ENCODE measurements at regions of chr15 and their contacts with region 1.

Region 1: DNA sequence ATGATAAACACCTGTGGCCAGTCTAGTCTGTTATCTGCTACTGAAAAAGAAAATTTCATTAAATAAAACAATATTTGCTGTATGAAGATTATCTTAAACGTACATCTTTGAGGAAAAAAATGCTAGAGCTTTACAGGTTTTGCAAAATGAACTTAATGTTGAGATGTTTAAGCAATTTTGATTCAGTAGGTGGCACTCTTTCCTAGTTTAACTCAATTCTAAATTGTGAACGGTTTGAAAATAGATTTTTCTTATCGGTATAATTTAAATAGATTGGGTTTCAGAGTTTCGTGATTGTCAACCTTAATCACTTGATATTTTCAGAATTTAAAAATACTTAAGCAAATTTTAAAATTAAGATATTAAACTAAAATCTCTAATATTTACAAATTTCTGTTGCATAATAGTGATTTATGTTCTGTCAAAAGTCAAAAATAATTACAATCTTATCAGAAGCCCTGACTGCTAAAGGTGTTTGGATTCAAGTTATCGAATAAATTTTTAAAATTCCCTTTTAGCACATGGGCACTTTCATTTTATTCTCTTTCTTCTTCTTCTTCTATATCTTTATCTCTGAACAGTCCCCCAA is 7.0 kb upstream of the RNF111 start:
- DNase-seq: no peak
- H3K4me3 ChIP-seq: no peak overlapping the region
- H3K4me3 Mint-ChIP-seq: no peak overlapping the region
- H3K27ac Mint-ChIP-seq: no peak overlapping the region
- H3K4me1 ChIP-seq: no peaks in the 10 kb centered on the region
- H3K4me1 Mint-ChIP-seq: no peaks in the 10 kb centered on the region
- H3K27me3 ChIP-seq: no peaks in the 10 kb centered on the region
- H3K27me3 Mint-ChIP-seq: peaks cover 4% of the 10 kb centered on the region
- CTCF ChIP-seq: peak in 1 of 2 experiments; percentile 24

Region 2: DNA sequence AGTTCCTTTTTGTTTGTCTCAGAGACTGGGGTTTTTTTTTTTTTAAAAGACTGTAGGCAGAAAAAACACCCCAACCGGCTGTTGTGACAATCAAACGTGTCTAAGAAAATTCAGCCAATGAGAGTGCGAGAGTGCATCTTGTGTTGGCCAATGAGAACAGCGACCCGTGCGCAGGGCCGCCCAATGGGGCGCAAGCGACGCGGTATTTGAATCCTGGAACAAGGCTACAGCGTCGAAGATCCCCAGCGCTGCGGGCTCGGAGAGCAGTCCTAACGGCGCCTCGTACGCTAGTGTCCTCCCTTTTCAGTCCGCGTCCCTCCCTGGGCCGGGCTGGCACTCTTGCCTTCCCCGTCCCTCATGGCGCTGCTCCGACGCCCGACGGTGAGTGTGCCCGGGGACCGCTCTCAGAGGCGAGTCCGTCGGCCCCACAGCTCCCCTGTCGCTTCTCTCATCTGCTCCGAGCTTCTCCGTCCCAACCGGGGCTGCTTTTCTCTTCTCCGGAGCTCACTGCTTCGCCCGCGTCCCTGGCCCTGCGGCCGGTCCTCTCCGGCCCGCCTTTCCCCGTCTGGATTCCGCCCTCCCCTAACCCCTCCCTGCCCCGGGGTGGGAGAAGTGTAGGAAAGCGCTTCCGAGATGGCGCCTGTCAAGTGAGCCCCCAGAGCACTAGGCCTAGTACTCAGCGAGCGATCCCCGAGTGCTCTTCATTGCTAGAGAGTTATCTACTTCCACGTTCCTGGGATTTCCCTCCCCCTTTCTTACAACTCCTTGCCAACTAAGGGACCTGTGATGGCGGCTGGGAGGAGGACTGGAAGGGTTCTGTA is 124.7 kb after region 1 on chr15 and contains the start of gene CCNB2:
- CTCF ChIA-PET with region 1: no interaction called
- POLR2A ChIA-PET with region 1: no interaction called
- intact Hi-C with region 1: loop called (anchors 2 kb)
- DNase-seq: peak; percentile 89 to 91
- H3K4me3 ChIP-seq: peak within 1 kb of the TSS; percentile 94
- H3K4me3 Mint-ChIP-seq: peak within 1 kb of the TSS; percentile 99
- H3K27ac Mint-ChIP-seq: peak within 1 kb of the TSS; percentile 100
- H3K4me1 ChIP-seq: no peaks in the 10 kb centered on the region
- H3K4me1 Mint-ChIP-seq: peaks cover 6% of the 10 kb centered on the region
- H3K27me3 ChIP-seq: no peaks in the 10 kb centered on the region
- H3K27me3 Mint-ChIP-seq: no peaks in the 10 kb centered on the region
- CTCF ChIP-seq: no peak
- total RNA-seq, gene CCNB2: 90.1 and 92.0 TPM in 2 replicates

Region 3: GRCh38 chr15:59138243-59138642 is 157.8 kb after region 1 on chr15:
- CTCF ChIA-PET with region 1: no interaction called
- POLR2A ChIA-PET with region 1: no interaction called
- intact Hi-C with region 1: loop called (anchors 1 kb)
- DNase-seq: peak; percentile 59 to 75
- H3K4me3 ChIP-seq: no peak overlapping the region
- H3K4me3 Mint-ChIP-seq: no peak overlapping the region
- H3K27ac Mint-ChIP-seq: no peak overlapping the region
- H3K4me1 ChIP-seq: no peaks in the 10 kb centered on the region
- H3K4me1 Mint-ChIP-seq: no peaks in the 10 kb centered on the region
- H3K27me3 ChIP-seq: no peaks in the 10 kb centered on the region
- H3K27me3 Mint-ChIP-seq: no peaks in the 10 kb centered on the region
- CTCF ChIP-seq: peak; percentile 62 to 73

Region 4: DNA sequence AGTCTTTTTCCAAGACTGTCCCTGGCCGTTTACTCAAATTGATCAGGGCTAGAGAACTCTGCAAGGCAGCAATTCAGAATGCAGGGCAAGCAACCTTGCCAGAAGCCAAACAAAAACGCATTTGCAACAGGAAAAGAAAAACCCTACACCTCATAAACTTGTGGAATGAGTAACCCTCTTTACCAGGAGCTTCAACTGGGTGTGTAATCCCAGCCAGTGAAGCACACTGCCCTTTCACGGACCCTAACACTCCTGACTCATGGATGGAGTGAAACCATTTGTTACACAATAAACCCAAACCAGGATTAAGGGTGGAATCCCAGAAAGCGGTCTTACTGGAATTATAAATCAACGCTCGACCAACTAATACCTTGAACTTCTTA is 211.4 kb after region 1 on chr15:
- CTCF ChIA-PET with region 1: no interaction called
- POLR2A ChIA-PET with region 1: no interaction called
- intact Hi-C with region 1: no loop called
- DNase-seq: no peak
- H3K4me3 ChIP-seq: no peak overlapping the region
- H3K4me3 Mint-ChIP-seq: no peak overlapping the region
- H3K27ac Mint-ChIP-seq: no peak overlapping the region
- H3K4me1 ChIP-seq: no peaks in the 10 kb centered on the region
- H3K4me1 Mint-ChIP-seq: no peaks in the 10 kb centered on the region
- H3K27me3 ChIP-seq: no peaks in the 10 kb centered on the region
- H3K27me3 Mint-ChIP-seq: no peaks in the 10 kb centered on the region
- CTCF ChIP-seq: no peak

Region 5: DNA sequence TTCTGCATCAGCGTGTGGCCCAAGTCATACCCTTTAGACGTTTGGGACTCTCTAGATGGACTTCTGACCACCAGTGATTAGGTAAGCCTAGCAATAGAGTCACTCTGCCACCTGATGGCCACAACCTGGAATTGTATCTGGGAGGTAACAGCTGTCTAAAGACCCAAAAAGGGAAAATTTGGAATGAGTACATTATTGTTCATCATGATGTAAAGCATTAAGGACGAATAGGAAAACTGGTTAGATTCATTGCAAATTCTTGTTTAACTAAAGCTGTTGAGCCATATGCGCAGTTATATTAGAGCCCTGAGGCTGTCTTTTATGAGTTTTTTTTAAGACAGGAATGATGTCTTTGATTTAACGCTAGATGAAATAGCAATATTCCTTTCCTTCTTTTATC is 521.2 kb after region 1 on chr15:
- CTCF ChIA-PET with region 1: interaction called, 3 read pairs
- POLR2A ChIA-PET with region 1: no interaction called
- intact Hi-C with region 1: loop called (anchors 2 kb)
- DNase-seq: peak; percentile 69 to 72
- H3K4me3 ChIP-seq: no peak overlapping the region
- H3K4me3 Mint-ChIP-seq: no peak overlapping the region
- H3K27ac Mint-ChIP-seq: no peak overlapping the region
- H3K4me1 ChIP-seq: no peaks in the 10 kb centered on the region
- H3K4me1 Mint-ChIP-seq: no peaks in the 10 kb centered on the region
- H3K27me3 ChIP-seq: no peaks in the 10 kb centered on the region
- H3K27me3 Mint-ChIP-seq: peaks cover 3% of the 10 kb centered on the region
- CTCF ChIP-seq: peak; percentile 68 to 78